Calu3 (cell line): ENCODE measurements at regions of chr5 and their contacts with region 1.

Region 1: GRCh38 chr5:149035372-149035790 is 27.5 kb downstream of the SH3TC2 start:
- DNase-seq: peak; percentile 89
- H3K4me3 Mint-ChIP-seq: no peak overlapping the region
- H3K27ac Mint-ChIP-seq: peak overlapping the region; percentile 18
- H3K4me1 Mint-ChIP-seq: peaks cover 41% of the 10 kb centered on the region
- H3K27me3 Mint-ChIP-seq: no peaks in the 10 kb centered on the region
- CTCF ChIP-seq: peak; percentile 82

Region 2: GRCh38 chr5:148443998-148444397 is 591.4 kb before region 1 on chr5:
- CTCF ChIA-PET with region 1: no interaction called
- intact Hi-C with region 1: loop called (anchors 5 kb)
- DNase-seq: peak; percentile 70
- H3K4me3 Mint-ChIP-seq: no peak overlapping the region
- H3K27ac Mint-ChIP-seq: peak overlapping the region; percentile 23
- H3K4me1 Mint-ChIP-seq: no peaks in the 10 kb centered on the region
- H3K27me3 Mint-ChIP-seq: peaks cover under 1% of the 10 kb centered on the region
- CTCF ChIP-seq: peak; percentile 76

Region 3: DNA sequence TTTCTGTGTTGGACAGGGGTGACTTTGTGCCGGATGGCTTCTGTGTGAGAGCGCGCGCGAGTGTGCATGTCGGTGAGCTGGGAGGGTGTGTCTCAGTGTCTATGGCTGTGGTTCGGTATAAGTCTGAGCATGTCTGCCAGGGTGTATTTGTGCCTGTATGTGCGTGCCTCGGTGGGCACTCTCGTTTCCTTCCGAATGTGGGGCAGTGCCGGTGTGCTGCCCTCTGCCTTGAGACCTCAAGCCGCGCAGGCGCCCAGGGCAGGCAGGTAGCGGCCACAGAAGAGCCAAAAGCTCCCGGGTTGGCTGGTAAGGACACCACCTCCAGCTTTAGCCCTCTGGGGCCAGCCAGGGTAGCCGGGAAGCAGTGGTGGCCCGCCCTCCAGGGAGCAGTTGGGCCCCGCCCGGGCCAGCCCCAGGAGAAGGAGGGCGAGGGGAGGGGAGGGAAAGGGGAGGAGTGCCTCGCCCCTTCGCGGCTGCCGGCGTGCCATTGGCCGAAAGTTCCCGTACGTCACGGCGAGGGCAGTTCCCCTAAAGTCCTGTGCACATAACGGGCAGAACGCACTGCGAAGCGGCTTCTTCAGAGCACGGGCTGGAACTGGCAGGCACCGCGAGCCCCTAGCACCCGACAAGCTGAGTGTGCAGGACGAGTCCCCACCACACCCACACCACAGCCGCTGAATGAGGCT is 209.2 kb before region 1 on chr5 and contains the start of gene ADRB2:
- CTCF ChIA-PET with region 1: interaction called, 7 read pairs
- intact Hi-C with region 1: loop called (anchors 5 kb)
- DNase-seq: peak; percentile 99
- H3K4me3 Mint-ChIP-seq: peak within 1 kb of the TSS; percentile 88
- H3K27ac Mint-ChIP-seq: peak within 1 kb of the TSS; percentile 79
- H3K4me1 Mint-ChIP-seq: peaks cover 16% of the 10 kb centered on the region
- H3K27me3 Mint-ChIP-seq: no peaks in the 10 kb centered on the region
- CTCF ChIP-seq: no peak
- total RNA-seq, gene ADRB2: 16.6 and 16.9 TPM in 2 replicates

Region 4: GRCh38 chr5:148912714-148913398 is 122.5 kb before region 1 on chr5:
- CTCF ChIA-PET with region 1: interaction called, 14 read pairs
- intact Hi-C with region 1: loop called (anchors 1 kb)
- DNase-seq: peak; percentile 68
- H3K4me3 Mint-ChIP-seq: no peak overlapping the region
- H3K27ac Mint-ChIP-seq: peak overlapping the region; percentile 93
- H3K4me1 Mint-ChIP-seq: peaks cover 89% of the 10 kb centered on the region
- H3K27me3 Mint-ChIP-seq: no peaks in the 10 kb centered on the region
- CTCF ChIP-seq: peak; percentile 28

Region 5: DNA sequence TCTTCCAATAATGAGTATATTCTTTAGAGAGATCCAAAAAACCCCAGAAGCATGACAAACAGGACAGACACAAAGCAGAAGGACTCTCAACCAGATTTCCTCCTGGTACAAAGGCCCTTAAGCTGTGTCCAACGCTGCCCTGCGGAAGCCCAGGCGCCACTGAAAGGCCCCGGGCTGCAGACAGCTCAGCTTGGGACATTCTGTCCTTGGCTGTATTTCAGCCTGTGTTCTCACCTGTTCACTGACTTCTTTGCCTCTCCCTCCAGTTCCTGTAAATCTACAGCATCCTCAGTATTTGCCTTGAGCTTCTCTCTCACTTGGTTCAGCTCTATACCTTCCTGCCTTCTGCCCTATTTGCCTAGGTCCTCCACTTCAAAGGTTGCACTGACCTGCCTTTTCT is 69.0 kb before region 1 on chr5:
- CTCF ChIA-PET with region 1: interaction called, 6 read pairs
- intact Hi-C with region 1: loop called (anchors 5 kb)
- DNase-seq: no peak
- H3K4me3 Mint-ChIP-seq: no peak overlapping the region
- H3K27ac Mint-ChIP-seq: peak overlapping the region; percentile 99
- H3K4me1 Mint-ChIP-seq: peaks cover 79% of the 10 kb centered on the region
- H3K27me3 Mint-ChIP-seq: no peaks in the 10 kb centered on the region
- CTCF ChIP-seq: no peak

Region 6: DNA sequence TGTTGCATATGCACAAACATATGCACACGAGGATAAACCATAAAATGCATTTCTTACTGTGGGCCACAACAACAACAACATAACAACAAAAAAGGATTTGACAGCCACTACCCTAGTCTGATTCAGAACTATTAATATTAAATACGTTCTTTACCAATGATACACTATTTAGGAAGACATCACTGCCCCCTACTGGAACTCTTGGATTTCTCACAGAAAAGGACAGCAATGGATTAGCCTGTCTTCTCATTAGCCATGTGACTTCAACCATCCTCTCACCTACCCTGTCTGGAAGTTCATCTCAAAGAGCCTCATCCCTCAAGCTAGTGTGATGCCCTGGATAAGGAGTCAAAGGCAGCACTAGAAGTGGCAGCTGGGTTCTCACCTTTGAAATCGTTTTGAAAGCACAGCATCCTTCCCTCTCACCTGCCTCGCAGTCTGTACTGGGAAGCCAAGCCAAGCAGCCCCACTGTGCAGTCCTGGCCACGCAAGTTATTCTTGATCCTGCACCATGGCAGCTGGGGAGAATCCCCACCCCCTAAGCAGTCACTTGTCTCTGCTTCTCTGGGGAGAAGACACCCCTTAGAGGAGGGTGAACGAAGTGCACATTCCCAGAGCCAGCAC is 37.1 kb before region 1 on chr5:
- CTCF ChIA-PET with region 1: interaction called, 16 read pairs
- intact Hi-C with region 1: loop called (anchors 2 kb)
- DNase-seq: peak; percentile 76
- H3K4me3 Mint-ChIP-seq: no peak overlapping the region
- H3K27ac Mint-ChIP-seq: peak overlapping the region; percentile 25
- H3K4me1 Mint-ChIP-seq: peaks cover 76% of the 10 kb centered on the region
- H3K27me3 Mint-ChIP-seq: no peaks in the 10 kb centered on the region
- CTCF ChIP-seq: peak; percentile 56

Region 7: GRCh38 chr5:149099920-149100319 is 64.5 kb after region 1 on chr5:
- CTCF ChIA-PET with region 1: no interaction called
- intact Hi-C with region 1: no loop called
- DNase-seq: no peak
- H3K4me3 Mint-ChIP-seq: no peak overlapping the region
- H3K27ac Mint-ChIP-seq: no peak overlapping the region
- H3K4me1 Mint-ChIP-seq: no peaks in the 10 kb centered on the region
- H3K27me3 Mint-ChIP-seq: no peaks in the 10 kb centered on the region
- CTCF ChIP-seq: no peak

Region 8: GRCh38 chr5:149268928-149269557 is 233.7 kb after region 1 on chr5:
- CTCF ChIA-PET with region 1: interaction called, 3 read pairs
- intact Hi-C with region 1: loop called (anchors 10 kb)
- DNase-seq: peak; percentile 18
- H3K4me3 Mint-ChIP-seq: no peak overlapping the region
- H3K27ac Mint-ChIP-seq: no peak overlapping the region
- H3K4me1 Mint-ChIP-seq: peaks cover 28% of the 10 kb centered on the region
- H3K27me3 Mint-ChIP-seq: no peaks in the 10 kb centered on the region
- CTCF ChIP-seq: peak; percentile 72